A549 (cell line): ENCODE measurements at regions of chr9 and their contacts with region 1.

Region 1: DNA sequence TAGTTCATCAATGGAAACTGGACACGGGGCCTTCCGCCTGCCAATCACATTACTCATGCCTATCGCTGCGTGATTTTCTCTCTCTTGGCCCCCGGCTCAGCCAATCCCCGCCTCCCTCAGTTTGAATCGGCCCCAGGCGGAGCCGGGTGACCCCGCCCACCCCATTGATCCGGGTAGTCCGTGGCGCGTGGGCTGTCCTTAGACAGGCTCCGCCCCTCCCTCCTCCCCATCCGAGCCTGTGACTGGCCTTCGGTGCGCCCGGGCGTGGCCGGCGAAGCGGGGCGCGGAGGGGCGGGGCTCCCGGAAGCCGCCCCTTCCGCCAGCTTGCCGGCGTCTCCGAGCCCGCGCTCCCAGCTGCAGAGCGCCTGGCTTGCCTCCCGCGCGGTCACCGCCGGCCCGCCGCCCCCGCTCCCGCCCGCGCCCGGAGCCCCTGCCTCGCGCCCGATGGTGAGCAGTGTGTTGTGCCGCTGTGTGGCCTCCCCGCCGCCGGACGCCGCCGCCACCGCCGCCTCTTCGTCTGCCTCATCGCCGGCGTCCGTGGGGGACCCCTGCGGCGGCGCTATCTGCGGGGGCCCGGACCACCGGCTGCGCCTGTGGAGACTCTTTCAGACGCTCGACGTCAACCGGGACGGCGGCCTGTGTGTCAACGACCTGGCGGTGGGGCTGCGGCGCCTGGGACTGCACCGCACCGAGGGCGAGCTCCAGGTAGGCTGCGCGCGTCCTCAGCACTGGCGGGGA is at the start of gene SLC25A25:
- DNase-seq: peak; percentile 96 to 99
- ATAC-seq: peak; percentile 80 to 86
- H3K4me3 ChIP-seq: peak within 1 kb of the TSS; percentile 84
- H3K27ac ChIP-seq: peak within 1 kb of the TSS; percentile 93 to 99
- H3K4me1 ChIP-seq: peaks cover 41% of the 10 kb centered on the region
- CTCF ChIP-seq: no peak
- EP300 ChIP-seq: no peak
- POLR2A ChIP-seq: peak; percentile 70
- RAD21 ChIP-seq: no peak; a peak in 1 of 5 replicates
- polyA plus RNA-seq, gene SLC25A25: 7.0 TPM in 2 replicates

Region 2: DNA sequence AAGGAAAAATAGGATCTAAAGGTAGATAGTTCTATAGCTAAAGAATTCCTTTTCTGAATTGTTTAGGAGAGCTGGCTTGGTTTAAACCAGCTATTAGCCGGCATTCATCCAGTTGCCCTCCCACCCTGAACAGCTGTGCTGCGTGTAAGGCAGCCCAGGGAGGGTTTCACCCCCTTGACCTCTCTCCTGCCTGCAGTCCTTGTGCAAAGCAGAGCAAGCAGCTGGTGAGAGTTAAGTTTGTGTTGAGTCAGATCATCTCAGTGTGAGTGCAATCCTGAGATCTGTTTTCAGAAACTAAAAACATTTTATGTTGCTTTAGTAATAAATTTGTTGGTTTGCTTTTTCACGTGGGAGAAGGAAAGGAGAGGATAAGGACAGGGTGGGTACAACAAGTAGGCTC is 13.0 kb after region 1 on chr9:
- CTCF ChIA-PET with region 1: interaction called, 14 read pairs
- POLR2A ChIA-PET with region 1: interaction called, 15 read pairs
- DNase-seq: no peak
- ATAC-seq: peak in 1 of 2 experiments; percentile 24; a peak in 2 of 6 replicates
- H3K4me3 ChIP-seq: no peak overlapping the region
- H3K27ac ChIP-seq: peak overlapping the region; percentile 80 to 88
- H3K4me1 ChIP-seq: peaks cover 55% of the 10 kb centered on the region
- CTCF ChIP-seq: no peak
- EP300 ChIP-seq: no peak
- POLR2A ChIP-seq: no peak
- RAD21 ChIP-seq: no peak

Region 3: DNA sequence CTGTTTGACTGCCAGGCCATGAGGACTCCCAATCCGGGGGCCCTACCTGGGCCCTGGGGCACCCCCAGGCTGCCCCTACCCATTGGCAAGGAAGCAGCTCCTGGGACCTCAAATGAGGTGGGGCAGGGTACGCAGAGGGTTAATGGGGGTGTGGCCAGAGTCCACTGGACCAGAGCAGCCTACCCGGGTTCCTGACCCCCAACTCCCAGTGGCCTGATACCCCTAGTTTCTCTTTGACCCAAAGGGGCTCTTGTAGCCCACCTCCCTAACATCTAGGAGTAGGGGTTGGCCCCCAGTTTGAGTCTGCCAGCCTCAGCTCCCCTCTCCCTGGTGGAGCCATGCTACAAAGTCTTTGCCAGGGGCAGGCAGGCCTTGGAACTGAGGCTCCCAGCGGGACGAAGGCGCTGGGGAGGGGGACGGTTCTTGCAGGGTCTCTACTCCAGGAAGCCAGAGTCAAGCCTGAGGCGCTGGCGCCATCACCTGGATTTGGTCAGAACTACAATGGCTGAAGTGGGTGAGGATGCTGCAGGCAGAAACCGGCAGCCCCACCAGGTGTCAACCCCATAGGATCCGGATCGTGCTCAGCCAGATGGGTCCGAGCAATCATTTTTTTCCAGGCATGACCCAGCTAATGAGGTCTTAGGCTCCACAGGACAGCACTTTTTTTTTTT is 344.2 kb after region 1 on chr9:
- CTCF ChIA-PET with region 1: no interaction called
- POLR2A ChIA-PET with region 1: no interaction called
- DNase-seq: peak; percentile 30 to 52
- ATAC-seq: peak in 1 of 2 experiments; percentile 71; a peak in 3 of 6 replicates
- H3K4me3 ChIP-seq: no peak overlapping the region
- H3K27ac ChIP-seq: no peak overlapping the region; a peak in 1 of 6 replicates
- H3K4me1 ChIP-seq: no peaks in the 10 kb centered on the region
- CTCF ChIP-seq: peak; percentile 42; the same call in 2 of the 3 replicates
- EP300 ChIP-seq: no peak
- POLR2A ChIP-seq: no peak
- RAD21 ChIP-seq: peak; percentile 60 to 79